A673 (cell line): ENCODE measurements at regions of chr18 and their contacts with region 1.

Region 1: GRCh38 chr18:13558124-13558523 is 168.2 kb downstream of the FAM210A start:
- DNase-seq: peak; percentile 68
- H3K4me3 ChIP-seq: no peak overlapping the region
- H3K27ac ChIP-seq: no peak overlapping the region
- H3K4me1 ChIP-seq: no peaks in the 10 kb centered on the region
- H3K27me3 ChIP-seq: peaks cover 13% of the 10 kb centered on the region
- CTCF ChIP-seq: peak; percentile 76

Region 2: DNA sequence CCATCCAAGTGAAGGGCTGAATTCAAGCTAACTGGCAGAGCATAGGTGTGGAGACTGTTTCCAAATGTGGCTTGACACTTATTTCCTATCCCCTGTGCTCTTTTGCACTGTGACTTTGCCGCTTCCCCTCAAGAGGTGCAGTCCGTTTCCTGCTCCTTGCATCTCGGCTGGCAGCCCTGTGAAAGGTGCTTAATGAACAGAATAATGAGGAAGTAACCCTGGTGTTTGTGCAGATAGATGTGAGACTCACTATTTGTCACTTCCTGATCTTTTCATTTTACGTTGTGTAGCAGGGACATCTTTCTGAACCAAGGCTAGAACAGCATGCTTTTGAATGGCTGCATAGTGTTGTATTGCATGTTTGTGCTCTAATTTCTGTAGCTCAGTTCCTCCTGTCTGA is 506.2 kb before region 1 on chr18:
- CTCF ChIA-PET with region 1: no interaction called
- POLR2A ChIA-PET with region 1: no interaction called
- intact Hi-C with region 1: no loop called
- DNase-seq: no peak
- H3K4me3 ChIP-seq: no peak overlapping the region
- H3K27ac ChIP-seq: peak overlapping the region; percentile 28
- H3K4me1 ChIP-seq: no peaks in the 10 kb centered on the region
- H3K27me3 ChIP-seq: no peaks in the 10 kb centered on the region
- CTCF ChIP-seq: no peak

Region 3: GRCh38 chr18:13543811-13544732 is 14.1 kb before region 1 on chr18:
- CTCF ChIA-PET with region 1: interaction called, 12 read pairs
- POLR2A ChIA-PET with region 1: no interaction called
- intact Hi-C with region 1: no loop called
- DNase-seq: no peak
- H3K4me3 ChIP-seq: no peak overlapping the region
- H3K27ac ChIP-seq: no peak overlapping the region
- H3K4me1 ChIP-seq: peaks cover 31% of the 10 kb centered on the region
- H3K27me3 ChIP-seq: no peaks in the 10 kb centered on the region
- CTCF ChIP-seq: no peak

Region 4: GRCh38 chr18:13629841-13630715 is 72.0 kb after region 1 on chr18:
- CTCF ChIA-PET with region 1: no interaction called
- POLR2A ChIA-PET with region 1: no interaction called
- intact Hi-C with region 1: loop called (anchors 1 kb)
- DNase-seq: peak; percentile 80
- H3K4me3 ChIP-seq: no peak overlapping the region
- H3K27ac ChIP-seq: no peak overlapping the region
- H3K4me1 ChIP-seq: no peaks in the 10 kb centered on the region
- H3K27me3 ChIP-seq: no peaks in the 10 kb centered on the region
- CTCF ChIP-seq: peak; percentile 78

Region 5: DNA sequence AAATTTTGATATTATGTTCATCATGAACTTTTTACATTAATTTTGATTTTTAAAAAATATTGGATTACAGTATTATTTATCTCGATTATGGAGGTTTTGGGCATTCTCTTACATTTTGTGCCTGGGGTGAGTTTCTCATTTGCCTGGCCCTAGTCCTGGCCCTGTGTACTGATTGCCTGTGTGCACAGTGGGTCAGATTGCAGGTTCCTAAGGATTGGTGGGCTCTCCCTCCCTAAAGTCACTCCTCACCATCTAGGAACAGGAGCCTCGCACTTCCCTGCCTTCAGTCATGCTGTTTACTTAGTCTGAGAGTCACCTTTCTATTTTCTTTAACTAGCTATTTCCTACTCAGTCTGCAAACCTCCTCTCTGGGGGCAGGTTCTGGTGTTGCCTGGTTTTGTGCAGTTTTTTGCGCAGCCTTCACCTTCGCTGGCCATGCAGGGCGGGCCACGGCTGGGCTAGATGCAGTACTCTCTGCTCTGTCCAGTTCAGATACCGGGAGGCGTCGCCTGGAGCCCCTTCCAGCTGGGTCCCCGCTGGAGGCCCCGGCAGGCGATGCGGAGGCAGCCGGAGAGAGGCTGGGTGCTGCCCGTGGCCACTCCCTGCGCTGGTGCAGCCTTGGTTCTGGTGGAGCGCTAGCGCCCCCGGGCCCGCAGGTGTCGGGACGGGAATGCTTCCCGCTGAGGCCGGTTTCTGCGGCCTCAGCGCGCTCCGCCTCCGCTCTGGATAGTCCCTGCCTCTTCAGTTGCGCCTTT is 242.6 kb after region 1 on chr18:
- CTCF ChIA-PET with region 1: no interaction called
- POLR2A ChIA-PET with region 1: no interaction called
- intact Hi-C with region 1: loop called (anchors 5 kb)
- DNase-seq: peak; percentile 58
- H3K4me3 ChIP-seq: peak overlapping the region; percentile 9
- H3K27ac ChIP-seq: no peak overlapping the region
- H3K4me1 ChIP-seq: peaks cover 4% of the 10 kb centered on the region
- H3K27me3 ChIP-seq: peaks cover 34% of the 10 kb centered on the region
- CTCF ChIP-seq: peak; percentile 57